MCF 10A (cell line): ENCODE measurements at regions of chr1 and their contacts with region 1.

Region 1: GRCh38 chr1:36223993-36224536 is at the start of gene THRAP3:
- DNase-seq: peak; percentile 99
- H3K4me3 Mint-ChIP-seq: peak within 1 kb of the TSS; percentile 92
- H3K27ac Mint-ChIP-seq: peak within 1 kb of the TSS; percentile 98
- H3K4me1 Mint-ChIP-seq: peaks cover 26% of the 10 kb centered on the region
- H3K27me3 Mint-ChIP-seq: no peaks in the 10 kb centered on the region
- CTCF ChIP-seq: no peak
- total RNA-seq, gene THRAP3: 92.2 and 116 TPM in 2 replicates

Region 2: DNA sequence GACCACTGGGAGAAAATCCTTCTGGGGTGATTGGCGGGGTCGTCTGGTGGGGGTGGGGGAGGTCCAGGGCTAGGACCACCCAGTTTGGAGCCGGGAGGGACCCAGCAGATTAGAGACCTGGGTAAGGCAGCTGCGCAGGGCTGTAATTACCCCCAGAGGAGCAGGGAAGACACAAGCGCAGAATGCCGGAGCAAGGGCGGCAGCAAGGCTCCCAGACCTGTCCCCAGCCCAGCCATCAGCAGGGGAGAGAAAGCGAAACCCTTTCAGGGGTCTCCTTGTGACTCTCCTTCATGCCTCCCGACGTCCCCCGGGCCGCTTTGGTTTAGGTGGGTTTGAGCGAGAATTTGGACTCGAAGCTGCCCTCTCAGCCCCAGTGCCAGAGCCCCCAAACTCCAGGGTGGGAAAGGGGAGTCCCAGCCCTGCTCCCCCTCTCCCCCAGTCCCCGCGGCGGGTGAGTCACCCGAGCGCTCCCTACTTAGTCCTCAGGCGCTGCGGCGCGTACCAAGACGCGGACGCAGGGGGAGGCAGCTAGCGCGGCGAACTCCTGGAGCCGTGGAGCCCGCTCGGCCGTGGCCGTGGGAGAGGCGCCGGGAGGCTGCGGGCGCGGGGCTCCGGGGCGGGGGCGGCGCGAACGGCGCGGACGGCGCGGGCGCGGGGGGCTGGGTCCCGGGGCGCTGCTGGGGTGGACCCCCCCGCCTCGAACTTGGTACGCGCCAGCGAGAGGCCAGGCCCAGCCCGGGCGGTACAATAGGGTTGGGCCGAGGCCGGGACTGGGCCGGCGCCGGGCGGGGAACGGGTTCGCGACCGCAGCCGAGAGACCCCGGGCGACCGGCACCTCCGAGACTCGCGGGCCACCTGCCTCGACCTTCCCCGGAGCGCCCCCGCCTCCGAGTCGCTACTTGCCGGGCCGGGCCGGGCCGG is 68.4 kb before region 1 on chr1 and contains the start of gene MAP7D1:
- CTCF ChIA-PET with region 1: interaction called, 23 read pairs
- POLR2A ChIA-PET with region 1: interaction called, 59 read pairs
- intact Hi-C with region 1: no loop called
- DNase-seq: peak; percentile 83
- H3K4me3 Mint-ChIP-seq: peak within 1 kb of the TSS; percentile 86
- H3K27ac Mint-ChIP-seq: peak within 1 kb of the TSS; percentile 97
- H3K4me1 Mint-ChIP-seq: peaks cover 36% of the 10 kb centered on the region
- H3K27me3 Mint-ChIP-seq: no peaks in the 10 kb centered on the region
- CTCF ChIP-seq: no peak
- total RNA-seq, gene MAP7D1: 131 and 170 TPM in 2 replicates

Region 3: DNA sequence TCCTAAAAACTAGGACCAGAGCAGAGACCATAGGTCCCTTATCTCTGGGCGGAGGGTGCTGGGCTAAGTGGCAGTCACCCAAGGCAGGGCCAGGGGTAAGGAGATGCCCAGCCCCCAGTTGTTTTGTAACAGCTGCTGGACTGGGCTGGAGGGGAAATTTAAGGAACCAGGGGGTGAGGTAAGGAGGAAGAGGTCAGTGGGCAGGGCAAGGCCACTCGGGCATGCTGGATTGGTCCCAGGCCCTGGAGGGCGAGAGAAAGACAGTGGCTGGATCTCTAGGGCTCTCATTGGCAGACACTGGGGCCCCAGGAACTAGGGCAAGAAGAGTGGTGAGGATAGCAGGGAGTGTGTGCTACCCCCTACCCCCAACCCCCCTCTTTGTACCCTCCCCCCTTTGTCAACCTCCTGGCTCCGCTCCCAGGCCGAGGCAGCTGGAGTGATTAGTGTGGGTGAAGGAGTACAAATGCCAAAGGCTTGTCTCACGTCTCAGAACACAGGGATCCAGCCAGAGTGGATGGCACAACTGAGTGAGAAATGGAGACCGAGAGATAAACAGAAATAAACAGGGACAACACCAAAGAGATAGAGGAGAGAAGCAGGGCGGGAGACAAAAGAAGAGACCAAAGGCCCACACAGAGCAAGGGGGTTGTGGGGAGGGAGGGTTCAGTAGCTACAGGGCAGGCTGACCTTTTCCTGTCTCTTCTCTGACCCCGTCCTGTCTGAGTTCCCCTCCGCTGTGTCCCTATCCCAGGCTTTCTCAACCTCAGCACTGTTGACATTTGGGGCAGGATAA is 20.3 kb before region 1 on chr1:
- CTCF ChIA-PET with region 1: interaction called, 5 read pairs
- POLR2A ChIA-PET with region 1: interaction called, 31 read pairs
- intact Hi-C with region 1: no loop called
- DNase-seq: peak; percentile 75
- H3K4me3 Mint-ChIP-seq: peak overlapping the region; percentile 52
- H3K27ac Mint-ChIP-seq: peak overlapping the region; percentile 97
- H3K4me1 Mint-ChIP-seq: peaks cover 30% of the 10 kb centered on the region
- H3K27me3 Mint-ChIP-seq: no peaks in the 10 kb centered on the region
- CTCF ChIP-seq: no peak

Region 4: GRCh38 chr1:36248250-36248894 is 24.3 kb after region 1 on chr1:
- CTCF ChIA-PET with region 1: interaction called, 6 read pairs
- POLR2A ChIA-PET with region 1: interaction called, 72 read pairs
- intact Hi-C with region 1: no loop called
- DNase-seq: peak; percentile 93
- H3K4me3 Mint-ChIP-seq: peak overlapping the region; percentile 57
- H3K27ac Mint-ChIP-seq: peak overlapping the region; percentile 92
- H3K4me1 Mint-ChIP-seq: peaks cover 28% of the 10 kb centered on the region
- H3K27me3 Mint-ChIP-seq: no peaks in the 10 kb centered on the region
- CTCF ChIP-seq: no peak

Region 5: GRCh38 chr1:36285448-36286101 is 61.5 kb after region 1 on chr1:
- CTCF ChIA-PET with region 1: interaction called, 9 read pairs
- POLR2A ChIA-PET with region 1: interaction called, 39 read pairs
- intact Hi-C with region 1: loop called (anchors 2 kb)
- DNase-seq: peak; percentile 89
- H3K4me3 Mint-ChIP-seq: no peak overlapping the region
- H3K27ac Mint-ChIP-seq: no peak overlapping the region
- H3K4me1 Mint-ChIP-seq: peaks cover 7% of the 10 kb centered on the region
- H3K27me3 Mint-ChIP-seq: no peaks in the 10 kb centered on the region
- CTCF ChIP-seq: peak; percentile 67

Region 6: DNA sequence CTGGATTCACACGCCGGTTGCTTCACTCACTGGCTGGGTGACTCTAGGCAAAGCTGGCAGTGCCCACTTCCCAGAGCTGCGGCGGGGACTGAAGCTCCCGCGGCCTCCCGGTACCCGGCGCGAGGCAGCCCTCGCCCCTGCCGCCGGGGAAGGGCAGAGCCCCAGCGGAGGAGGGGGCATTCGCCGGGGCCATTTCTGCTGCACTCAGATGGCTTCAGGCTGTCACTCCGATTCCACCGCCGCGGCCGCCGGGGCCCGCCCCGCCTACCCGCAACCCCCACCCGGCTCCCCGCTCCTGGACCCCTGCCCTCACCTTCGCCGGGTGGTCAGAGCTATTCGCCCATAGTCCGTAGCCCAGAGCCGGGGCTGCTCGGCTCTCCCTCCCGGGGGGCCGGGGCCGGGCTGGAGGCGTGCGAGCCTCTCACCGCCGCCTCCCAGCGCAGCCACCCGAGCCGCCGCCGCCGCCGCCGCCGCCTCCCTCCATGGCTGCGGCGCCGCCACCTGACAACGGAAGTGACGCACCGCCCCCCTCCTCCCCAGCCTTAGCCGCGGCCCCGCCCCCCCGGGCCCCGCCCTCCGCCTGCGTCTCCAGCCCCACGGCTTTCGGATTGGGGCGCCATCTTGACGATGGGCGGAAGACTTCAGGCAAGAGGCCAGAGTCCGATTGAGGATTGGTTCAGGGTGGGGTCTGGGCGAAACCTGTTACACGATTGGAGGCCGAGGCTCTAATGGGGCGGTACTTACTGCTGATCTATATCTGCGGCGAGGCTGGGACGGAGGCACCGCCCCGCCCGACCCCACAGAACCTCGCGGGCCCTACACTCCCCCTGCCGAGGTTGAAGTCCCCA is 161.6 kb after region 1 on chr1 and contains the start of gene STK40:
- CTCF ChIA-PET with region 1: no interaction called
- POLR2A ChIA-PET with region 1: interaction called, 12 read pairs
- intact Hi-C with region 1: no loop called
- DNase-seq: peak; percentile 99
- H3K4me3 Mint-ChIP-seq: peak within 1 kb of the TSS; percentile 89
- H3K27ac Mint-ChIP-seq: peak within 1 kb of the TSS; percentile 99
- H3K4me1 Mint-ChIP-seq: peaks cover 39% of the 10 kb centered on the region
- H3K27me3 Mint-ChIP-seq: no peaks in the 10 kb centered on the region
- CTCF ChIP-seq: no peak
- total RNA-seq, gene STK40: 44.0 and 47.4 TPM in 2 replicates